Aorta (tissue), 5 donors: ENCODE measurements at regions of chr2 and their contacts with region 1.

Region 1: GRCh38 chr2:37672104-37672869 is 845 bp upstream of the CDC42EP3 start:
- DNase-seq: peak; percentile 84 to 89
- ATAC-seq: peak; percentile 75
- H3K4me3 ChIP-seq: peak overlapping the region; percentile 82 to 97
- H3K27ac ChIP-seq: peak overlapping the region; percentile 61 to 88
- H3K4me1 ChIP-seq: peaks cover 0 to 4% of the 10 kb centered on the region in 2 donors
- H3K27me3 ChIP-seq: no peaks in the 10 kb centered on the region

Region 2: GRCh38 chr2:37720533-37721200 is 48.4 kb after region 1 on chr2:
- intact Hi-C with region 1: loop called in 1 of 2 experiments (anchors 5 kb)
- DNase-seq: no peak
- ATAC-seq: no peak
- H3K4me3 ChIP-seq: no peak overlapping the region
- H3K27ac ChIP-seq: peak overlapping the region; percentile 96 to 97
- H3K4me1 ChIP-seq: peaks cover 0 to 8% of the 10 kb centered on the region in 2 donors
- H3K27me3 ChIP-seq: no peaks in the 10 kb centered on the region

Region 3: DNA sequence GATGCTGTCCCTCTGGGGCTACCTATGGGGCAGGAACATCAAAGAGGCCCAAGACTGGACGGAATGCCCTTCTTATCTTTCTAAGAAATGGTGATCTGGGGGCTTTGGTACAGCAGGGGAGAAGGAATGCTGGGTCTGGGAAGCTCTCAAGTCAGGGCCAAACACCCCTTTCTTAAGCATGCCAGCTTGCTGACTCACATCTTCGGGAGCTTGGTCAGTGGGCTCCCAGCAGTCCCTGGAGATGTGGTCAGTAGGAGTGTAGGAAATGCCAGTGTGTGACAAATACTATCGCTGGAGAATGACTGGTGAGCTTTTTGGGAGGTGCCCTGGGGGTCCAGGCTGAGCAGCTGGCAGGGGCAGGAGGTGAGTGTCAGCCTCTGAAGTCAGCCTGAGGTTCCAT is 104.2 kb after region 1 on chr2:
- intact Hi-C with region 1: loop called in 1 of 2 experiments (anchors 5 kb)
- DNase-seq: peak; percentile 77 to 80
- ATAC-seq: peak; percentile 63
- H3K4me3 ChIP-seq: no peak overlapping the region
- H3K27ac ChIP-seq: peak overlapping the region; percentile 94 to 95
- H3K4me1 ChIP-seq: peaks cover 3 to 8% of the 10 kb centered on the region in 2 donors
- H3K27me3 ChIP-seq: no peaks in the 10 kb centered on the region

Region 4: GRCh38 chr2:37877457-37878315 is 205.4 kb after region 1 on chr2:
- intact Hi-C with region 1: no loop called
- DNase-seq: no peak
- ATAC-seq: peak; percentile 70
- H3K4me3 ChIP-seq: no peak overlapping the region
- H3K27ac ChIP-seq: no peak overlapping the region
- H3K4me1 ChIP-seq: no peaks in the 10 kb centered on the region
- H3K27me3 ChIP-seq: no peaks in the 10 kb centered on the region